ENCODE measurements at regions of chr22 and their contacts with region 1.

Region 1: GRCh38 chr22:29359469-29359868 is 28.9 kb downstream of the AP1B1 start:
- DNase-seq: peak; percentile 28 to 50
- ATAC-seq: peak; percentile 86 to 97
- H3K4me3 ChIP-seq: no peak overlapping the region
- H3K27ac ChIP-seq: no peak overlapping the region
- H3K4me1 ChIP-seq: no peaks in the 10 kb centered on the region
- CTCF ChIP-seq: peak; percentile 56
- EP300 ChIP-seq: no peak
- POLR2A ChIP-seq: no peak
- RAD21 ChIP-seq: peak; percentile 63 to 65

Region 2: GRCh38 chr22:28907311-28908008 is 452.0 kb before region 1 on chr22:
- CTCF ChIA-PET with region 1: no interaction called
- POLR2A ChIA-PET with region 1: no interaction called
- DNase-seq: no peak
- ATAC-seq: no peak
- H3K4me3 ChIP-seq: no peak overlapping the region
- H3K27ac ChIP-seq: no peak overlapping the region
- H3K4me1 ChIP-seq: peaks cover 70% of the 10 kb centered on the region
- CTCF ChIP-seq: no peak
- EP300 ChIP-seq: no peak
- POLR2A ChIP-seq: no peak
- RAD21 ChIP-seq: no peak

Region 3: DNA sequence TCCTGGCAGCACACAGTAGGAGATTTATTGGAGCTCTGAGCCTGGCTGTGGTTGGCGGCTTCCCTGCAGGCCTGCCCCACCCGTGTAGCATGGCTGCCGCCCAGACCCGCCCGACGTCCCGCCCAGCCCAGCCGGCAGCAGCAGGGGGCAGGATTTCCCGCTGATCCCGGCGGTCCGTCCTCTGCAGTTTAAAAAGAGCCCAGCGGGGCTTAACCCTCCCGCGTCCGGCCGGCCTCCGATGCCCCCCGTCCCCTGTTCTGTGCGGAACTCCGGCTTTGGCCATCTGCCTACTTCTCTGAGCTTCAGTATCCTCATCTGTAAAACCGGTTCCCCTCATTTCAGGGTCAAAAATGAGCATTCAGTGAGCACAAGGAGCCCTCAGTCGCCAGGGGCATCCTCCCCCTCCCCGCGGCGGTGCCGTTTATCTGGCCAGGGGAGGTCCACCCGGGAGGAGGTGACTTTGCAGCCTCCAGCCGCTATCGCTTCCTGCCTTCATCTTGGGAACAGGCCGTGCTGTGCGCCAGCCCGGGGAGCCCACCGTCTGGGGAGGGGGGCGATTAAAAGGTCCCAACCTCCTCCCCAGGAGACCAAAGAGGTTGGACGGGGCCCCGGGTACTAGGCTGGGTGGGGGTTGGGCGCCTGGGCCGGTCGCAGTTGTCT is 53.2 kb before region 1 on chr22 and contains the start of gene GAS2L1:
- CTCF ChIA-PET with region 1: interaction called, 40 read pairs
- POLR2A ChIA-PET with region 1: no interaction called
- DNase-seq: peak; percentile 76 to 86
- ATAC-seq: peak; percentile 51 to 79
- H3K4me3 ChIP-seq: peak within 1 kb of the TSS; percentile 80
- H3K27ac ChIP-seq: peak within 1 kb of the TSS; percentile 96 to 98
- H3K4me1 ChIP-seq: peaks cover 46% of the 10 kb centered on the region
- CTCF ChIP-seq: peak; percentile 26; the same call in 1 of the 3 replicates
- EP300 ChIP-seq: no peak
- POLR2A ChIP-seq: no peak
- RAD21 ChIP-seq: peak in 1 of 2 experiments; percentile 43; a peak in 2 of 5 replicates
- polyA plus RNA-seq, gene GAS2L1: 6.5 and 7.6 TPM in 2 replicates

Region 4: GRCh38 chr22:29313121-29313580 is 46.3 kb before region 1 on chr22:
- CTCF ChIA-PET with region 1: interaction called, 13 read pairs
- POLR2A ChIA-PET with region 1: no interaction called
- DNase-seq: peak in 1 of 2 experiments; percentile 70
- ATAC-seq: peak in 1 of 2 experiments; percentile 8; a peak in 3 of 6 replicates
- H3K4me3 ChIP-seq: no peak overlapping the region
- H3K27ac ChIP-seq: no peak overlapping the region
- H3K4me1 ChIP-seq: peaks cover 40% of the 10 kb centered on the region
- CTCF ChIP-seq: peak; percentile 28; the same call in 2 of the 3 replicates
- EP300 ChIP-seq: no peak
- POLR2A ChIP-seq: no peak
- RAD21 ChIP-seq: no peak

Region 5: GRCh38 chr22:29320546-29320945 is 38.9 kb before region 1 on chr22:
- CTCF ChIA-PET with region 1: interaction called, 13 read pairs
- POLR2A ChIA-PET with region 1: no interaction called
- DNase-seq: no peak
- ATAC-seq: peak; percentile 71 to 86; a peak in 4 of 6 replicates
- H3K4me3 ChIP-seq: no peak overlapping the region
- H3K27ac ChIP-seq: no peak overlapping the region
- H3K4me1 ChIP-seq: no peaks in the 10 kb centered on the region
- CTCF ChIP-seq: 0 out of 3 replicates have a peak, but pooled peaks have one; percentile 13
- EP300 ChIP-seq: no peak
- POLR2A ChIP-seq: no peak
- RAD21 ChIP-seq: no peak

Region 6: DNA sequence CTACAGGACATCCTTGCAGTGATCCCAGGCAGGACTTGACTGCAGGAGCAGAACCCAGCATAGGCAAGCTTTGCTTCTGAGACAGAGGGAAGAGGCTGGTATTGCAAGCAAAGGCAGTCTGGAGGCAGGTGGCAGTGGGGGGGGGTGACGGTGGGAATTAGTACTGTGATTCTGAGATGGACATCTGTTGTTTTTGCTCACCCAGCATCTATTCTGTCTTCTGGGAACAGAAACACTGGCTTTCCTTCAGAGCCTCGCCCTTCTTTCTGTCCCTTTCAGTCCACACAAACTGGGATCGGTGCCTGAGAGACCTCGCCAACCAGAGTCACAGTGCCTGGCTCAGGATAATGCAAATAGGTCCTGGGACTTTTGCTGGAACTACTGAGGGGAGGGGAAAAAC is 12.8 kb before region 1 on chr22:
- CTCF ChIA-PET with region 1: interaction called, 33 read pairs
- POLR2A ChIA-PET with region 1: no interaction called
- DNase-seq: no peak
- ATAC-seq: no peak
- H3K4me3 ChIP-seq: no peak overlapping the region
- H3K27ac ChIP-seq: no peak overlapping the region
- H3K4me1 ChIP-seq: peaks cover 8% of the 10 kb centered on the region; the same call in 1 of the 3 replicates
- CTCF ChIP-seq: no peak
- EP300 ChIP-seq: no peak
- POLR2A ChIP-seq: no peak
- RAD21 ChIP-seq: no peak

Region 7: GRCh38 chr22:29470159-29470855 is 110.8 kb after region 1 on chr22:
- CTCF ChIA-PET with region 1: no interaction called
- POLR2A ChIA-PET with region 1: no interaction called
- DNase-seq: peak; percentile 66 to 75
- ATAC-seq: peak; percentile 94 to 97
- H3K4me3 ChIP-seq: peak overlapping the region; percentile 51
- H3K27ac ChIP-seq: peak overlapping the region; percentile 65 to 84; a peak in 4 of 6 replicates
- H3K4me1 ChIP-seq: 0 out of 3 replicates have a peak, but pooled peaks cover 4% of the 10 kb centered on the region
- CTCF ChIP-seq: peak; percentile 82
- EP300 ChIP-seq: no peak
- POLR2A ChIP-seq: no peak
- RAD21 ChIP-seq: peak; percentile 42 to 59